GM13977 (cell line): ENCODE measurements at regions of chr11 and their contacts with region 1.

Region 1: GRCh38 chr11:96342961-96343711 is at the start of gene MAML2:
- DNase-seq: peak; percentile 86
- CTCF ChIP-seq: peak; percentile 93

Region 2: GRCh38 chr11:96054870-96055705 is 288.0 kb before region 1 on chr11:
- in situ Hi-C with region 1: loop called (anchors 25 kb)
- DNase-seq: no peak
- CTCF ChIP-seq: peak; percentile 53

Region 3: GRCh38 chr11:96579656-96580055 is 236.5 kb after region 1 on chr11:
- in situ Hi-C with region 1: no loop called
- DNase-seq: no peak
- CTCF ChIP-seq: no peak